ENCODE measurements at regions of chr5 and their contacts with region 1.

Region 1: DNA sequence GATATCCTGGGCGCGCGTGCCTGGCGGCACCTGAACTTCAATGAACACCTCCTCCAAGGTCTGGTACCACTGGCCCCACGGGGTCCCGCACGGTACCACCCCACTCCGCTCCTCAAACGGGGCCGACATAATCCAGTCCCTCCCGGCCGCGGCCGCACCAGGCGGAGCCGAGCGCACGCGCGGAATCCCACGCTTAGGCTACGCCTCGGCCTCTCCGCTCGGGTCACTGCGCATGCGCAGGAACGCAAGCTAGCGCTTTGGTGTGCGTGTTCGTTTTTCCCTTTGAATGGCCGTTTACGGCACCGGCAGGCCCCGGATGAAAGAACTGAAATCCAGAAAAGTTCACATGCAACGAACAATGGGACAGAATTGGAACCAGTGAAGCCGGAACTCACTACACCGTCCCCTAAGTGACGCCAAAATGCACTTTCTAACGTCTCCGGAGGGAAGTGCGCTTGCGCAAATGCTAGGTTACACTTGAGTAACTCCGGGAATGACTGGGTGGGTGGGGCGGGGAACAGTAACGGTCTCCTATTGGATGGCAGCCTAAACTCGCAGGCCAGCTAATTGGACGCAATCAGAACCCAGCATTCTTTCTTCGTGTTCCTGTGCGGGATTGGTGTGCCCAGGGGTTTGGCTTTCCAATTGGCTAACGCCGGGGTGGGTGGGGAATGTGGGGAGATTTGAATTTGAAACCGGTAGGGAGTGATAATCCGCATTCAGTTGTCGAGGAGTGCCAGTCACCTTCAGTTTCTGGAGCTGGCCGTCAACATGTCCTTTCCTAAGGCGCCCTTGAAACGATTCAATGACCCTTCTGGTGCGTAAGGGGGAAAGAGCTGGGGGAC is at the starts of genes HMMR and NUDCD2:
- DNase-seq: peak; percentile 92 to 98 (median 97)
- H3K4me3 ChIP-seq: peak within 1 kb of the TSS; percentile 99
- H3K4me3 Mint-ChIP-seq: peak within 1 kb of the TSS; percentile 92 to 98 (median 96)
- H3K27ac ChIP-seq: peak within 1 kb of the TSS; percentile 98
- H3K27ac Mint-ChIP-seq: peak within 1 kb of the TSS; percentile 96 to 100 (median 99)
- H3K4me1 ChIP-seq: peaks cover 30% of the 10 kb centered on the region
- H3K4me1 Mint-ChIP-seq: peaks cover 42 to 64% (median 61%) of the 10 kb centered on the region in 3 donors
- H3K27me3 ChIP-seq: no peaks in the 10 kb centered on the region
- H3K27me3 Mint-ChIP-seq: peaks cover 0 to 5% of the 10 kb centered on the region in 2 donors
- total RNA-seq, gene HMMR: 40.6 to 43.8 TPM
- total RNA-seq, gene NUDCD2: 31.3 to 36.2 TPM

Region 2: GRCh38 chr5:163373428-163374084 is 86.6 kb before region 1 on chr5:
- CTCF ChIA-PET with region 1: no interaction called
- POLR2A ChIA-PET with region 1: no interaction called
- DNase-seq: no peak
- H3K4me3 ChIP-seq: no peak overlapping the region
- H3K4me3 Mint-ChIP-seq: no peak overlapping the region
- H3K27ac ChIP-seq: no peak overlapping the region
- H3K27ac Mint-ChIP-seq: no peak overlapping the region
- H3K4me1 ChIP-seq: no peaks in the 10 kb centered on the region
- H3K4me1 Mint-ChIP-seq: no peaks in the 10 kb centered on the region
- H3K27me3 ChIP-seq: no peaks in the 10 kb centered on the region
- H3K27me3 Mint-ChIP-seq: peaks cover 0 to 10% of the 10 kb centered on the region in 2 donors

Region 3: DNA sequence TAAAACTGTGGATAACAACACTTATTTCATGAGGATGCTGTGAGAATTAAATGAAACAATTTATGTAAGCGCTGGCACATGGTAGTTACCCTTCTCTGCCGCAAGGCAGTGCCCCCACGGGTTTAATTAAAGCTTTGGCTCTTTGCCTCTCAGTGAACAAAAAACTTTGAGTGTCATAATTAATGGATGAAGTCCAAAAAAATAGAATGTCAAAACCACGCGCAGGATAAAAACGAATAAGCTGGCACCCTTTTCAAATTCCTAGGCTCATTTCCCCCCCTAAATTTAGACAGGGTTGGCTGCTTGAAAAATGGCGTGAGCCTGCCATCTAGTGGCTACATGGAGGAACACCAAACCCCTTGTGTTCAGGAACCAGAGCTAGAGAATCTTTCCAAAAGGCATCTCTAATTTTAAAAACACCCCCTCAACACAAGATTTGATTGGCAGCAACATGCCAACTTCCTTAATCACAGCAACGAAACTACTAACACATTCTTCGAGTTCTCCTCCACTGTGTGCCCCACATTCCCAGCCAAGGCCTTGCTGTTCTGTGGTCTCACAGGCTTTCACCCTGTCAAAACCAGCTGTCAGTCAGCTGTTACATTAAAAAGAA is 51.7 kb before region 1 on chr5:
- CTCF ChIA-PET with region 1: interaction called, 16 read pairs
- POLR2A ChIA-PET with region 1: no interaction called
- DNase-seq: peak; percentile 30 to 72 (median 41)
- H3K4me3 ChIP-seq: no peak overlapping the region
- H3K4me3 Mint-ChIP-seq: peak overlapping the region in 2 of 7 donors; percentile 5 to 33
- H3K27ac ChIP-seq: no peak overlapping the region
- H3K27ac Mint-ChIP-seq: no peak overlapping the region
- H3K4me1 ChIP-seq: no peaks in the 10 kb centered on the region
- H3K4me1 Mint-ChIP-seq: peaks cover 0 to 2% (median 0%) of the 10 kb centered on the region in 3 donors
- H3K27me3 ChIP-seq: no peaks in the 10 kb centered on the region
- H3K27me3 Mint-ChIP-seq: peaks cover 13 to 28% of the 10 kb centered on the region in 2 donors

Region 4: GRCh38 chr5:163437309-163438182 is 22.6 kb before region 1 on chr5 and contains the start of gene CCNG1:
- CTCF ChIA-PET with region 1: interaction called, 20 read pairs
- POLR2A ChIA-PET with region 1: interaction called, 31 read pairs
- DNase-seq: peak; percentile 81 to 92 (median 87)
- H3K4me3 ChIP-seq: peak within 1 kb of the TSS; percentile 89
- H3K4me3 Mint-ChIP-seq: peak within 1 kb of the TSS; percentile 88 to 95 (median 94)
- H3K27ac ChIP-seq: peak within 1 kb of the TSS; percentile 88
- H3K27ac Mint-ChIP-seq: peak within 1 kb of the TSS; percentile 82 to 97 (median 95)
- H3K4me1 ChIP-seq: peaks cover 32% of the 10 kb centered on the region
- H3K4me1 Mint-ChIP-seq: peaks cover 42 to 55% (median 51%) of the 10 kb centered on the region in 3 donors
- H3K27me3 ChIP-seq: no peaks in the 10 kb centered on the region
- H3K27me3 Mint-ChIP-seq: no peaks in the 10 kb centered on the region
- total RNA-seq, gene CCNG1: 77.8 to 90.9 TPM

Region 5: DNA sequence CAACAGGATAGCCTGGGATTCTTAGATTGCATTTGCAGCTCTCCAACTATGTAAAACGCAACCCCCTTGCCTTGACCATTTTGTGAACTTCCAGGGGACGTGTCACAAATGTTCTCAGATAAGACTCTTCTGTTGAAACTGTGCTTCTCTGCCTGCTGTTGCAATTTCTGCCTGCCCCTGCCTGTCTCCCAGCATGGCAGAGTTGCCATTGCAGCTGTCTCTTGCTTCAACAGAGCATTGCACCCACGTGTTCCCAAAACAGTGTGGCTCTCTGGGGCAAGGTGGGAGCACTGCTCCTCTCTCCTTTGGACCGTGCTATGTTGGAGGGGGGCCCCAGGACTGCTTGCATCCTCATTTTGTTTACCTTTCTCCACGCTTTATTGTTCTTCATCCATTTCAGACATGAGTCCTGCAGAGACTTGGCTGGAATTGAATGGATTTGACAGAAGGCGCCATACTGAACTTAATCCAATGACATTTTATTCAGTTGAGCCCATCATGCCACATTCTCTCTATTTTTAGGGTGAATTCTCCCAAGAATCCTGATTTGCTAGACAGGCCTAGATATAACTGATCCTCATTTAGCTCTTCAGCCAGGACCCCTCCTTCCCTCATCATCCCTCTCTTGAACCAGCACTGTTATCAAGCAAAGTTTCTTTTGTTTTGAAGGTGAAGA is 135.9 kb after region 1 on chr5:
- CTCF ChIA-PET with region 1: no interaction called
- POLR2A ChIA-PET with region 1: no interaction called
- DNase-seq: no peak
- H3K4me3 ChIP-seq: no peak overlapping the region
- H3K4me3 Mint-ChIP-seq: peak overlapping the region in 1 of 7 donors; percentile 42
- H3K27ac ChIP-seq: no peak overlapping the region
- H3K27ac Mint-ChIP-seq: peak overlapping the region in 1 of 8 donors; percentile 3
- H3K4me1 ChIP-seq: no peaks in the 10 kb centered on the region
- H3K4me1 Mint-ChIP-seq: no peaks in the 10 kb centered on the region
- H3K27me3 ChIP-seq: no peaks in the 10 kb centered on the region
- H3K27me3 Mint-ChIP-seq: peaks cover 12 to 23% of the 10 kb centered on the region in 2 donors

Measured in CD8-positive, alpha-beta memory T cell (primary cell).